ENCODE measurements at regions of chrX and their contacts with region 1.

Region 1: DNA sequence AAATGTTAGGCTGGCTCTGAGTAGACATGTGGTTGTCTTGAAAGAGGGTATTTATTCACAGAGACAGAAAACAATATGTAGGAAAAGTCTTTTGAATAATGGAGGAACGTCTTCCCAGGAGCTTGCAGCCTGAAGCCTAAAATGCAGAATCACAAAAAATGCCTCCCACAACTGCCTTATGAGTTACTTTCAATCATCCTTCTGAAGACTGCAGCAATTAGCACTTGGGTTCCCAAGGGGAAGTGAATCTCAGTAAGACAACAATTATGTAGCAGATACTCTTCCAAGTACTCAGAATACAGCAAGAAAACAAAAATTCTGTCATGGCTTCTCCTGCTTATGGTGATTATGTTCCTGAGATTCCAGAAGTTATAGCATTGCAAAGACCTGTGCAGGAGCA is 166.6 kb upstream of the TBL1X start:
- DNase-seq: no peak
- ATAC-seq: no peak
- H3K4me3 ChIP-seq: no peak overlapping the region
- H3K4me3 Mint-ChIP-seq: no peak overlapping the region
- H3K27ac ChIP-seq: no peak overlapping the region
- H3K27ac Mint-ChIP-seq: no peak overlapping the region
- H3K4me1 ChIP-seq: no peaks in the 10 kb centered on the region
- H3K4me1 Mint-ChIP-seq: no peaks in the 10 kb centered on the region
- H3K27me3 ChIP-seq: no peaks in the 10 kb centered on the region
- H3K27me3 Mint-ChIP-seq: no peaks in the 10 kb centered on the region
- CTCF ChIP-seq: no peak

Region 2: DNA sequence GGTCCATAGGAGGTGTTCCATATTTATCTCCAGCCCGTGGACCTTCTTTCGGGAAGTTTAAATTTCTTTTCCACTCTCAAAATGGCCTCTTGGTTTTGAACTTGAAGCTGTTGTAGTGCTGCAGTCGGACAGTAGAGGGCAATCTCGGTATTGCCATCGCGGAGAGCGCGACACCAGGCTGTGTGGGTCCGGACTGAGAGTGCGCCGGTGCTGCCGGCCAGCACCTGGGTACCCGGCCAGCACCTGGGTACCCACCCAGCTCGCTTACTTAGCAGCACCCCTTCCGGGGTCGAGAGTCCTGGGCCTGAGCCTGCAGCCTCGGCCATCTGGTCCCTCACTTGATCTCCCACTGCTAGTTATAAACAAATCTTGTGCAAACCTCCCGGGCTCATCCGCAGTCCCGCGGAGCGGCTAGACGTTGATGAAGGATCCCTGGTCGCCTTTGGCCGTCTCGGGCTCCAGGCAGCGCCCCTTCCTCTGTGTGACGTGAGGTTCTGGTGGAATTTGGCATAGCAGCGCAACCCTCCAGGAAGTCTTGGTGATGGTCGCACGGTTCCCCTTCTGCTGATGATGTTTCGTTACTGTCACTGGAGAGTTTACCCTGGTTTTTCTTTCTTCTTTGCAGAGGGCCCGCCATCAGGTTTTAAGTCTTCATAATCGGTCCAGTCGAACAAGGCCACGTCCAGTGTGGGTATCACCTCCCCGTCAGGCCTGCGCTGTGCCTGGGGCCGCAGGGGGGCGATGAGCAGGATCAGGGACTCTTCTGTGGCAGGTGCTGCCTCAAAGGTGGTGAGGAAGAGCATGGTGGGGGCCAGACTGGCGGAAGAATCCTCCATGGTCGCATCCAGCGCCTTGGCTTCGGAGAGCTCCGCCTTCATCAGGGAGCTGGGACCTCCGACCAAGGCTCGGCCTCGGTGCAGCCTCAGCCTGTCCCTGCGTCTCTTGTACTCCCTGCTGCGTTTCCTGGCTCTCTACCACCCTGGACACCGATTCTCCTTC is 514.8 kb before region 1 on chrX:
- CTCF ChIA-PET with region 1: no interaction called
- POLR2A ChIA-PET with region 1: no interaction called
- intact Hi-C with region 1: loop called in 1 of 2 experiments (anchors 5 kb)
- DNase-seq: peak in 7 of 9 experiments; percentile 1 to 52 (median 33)
- ATAC-seq: peak; percentile 67
- H3K4me3 ChIP-seq: no peak overlapping the region
- H3K4me3 Mint-ChIP-seq: peak overlapping the region; percentile 35
- H3K27ac ChIP-seq: no peak overlapping the region
- H3K27ac Mint-ChIP-seq: no peak overlapping the region
- H3K4me1 ChIP-seq: no peaks in the 10 kb centered on the region
- H3K4me1 Mint-ChIP-seq: peaks cover 6% of the 10 kb centered on the region
- H3K27me3 ChIP-seq: no peaks in the 10 kb centered on the region
- H3K27me3 Mint-ChIP-seq: no peaks in the 10 kb centered on the region
- CTCF ChIP-seq: peak; percentile 35

Region 3: DNA sequence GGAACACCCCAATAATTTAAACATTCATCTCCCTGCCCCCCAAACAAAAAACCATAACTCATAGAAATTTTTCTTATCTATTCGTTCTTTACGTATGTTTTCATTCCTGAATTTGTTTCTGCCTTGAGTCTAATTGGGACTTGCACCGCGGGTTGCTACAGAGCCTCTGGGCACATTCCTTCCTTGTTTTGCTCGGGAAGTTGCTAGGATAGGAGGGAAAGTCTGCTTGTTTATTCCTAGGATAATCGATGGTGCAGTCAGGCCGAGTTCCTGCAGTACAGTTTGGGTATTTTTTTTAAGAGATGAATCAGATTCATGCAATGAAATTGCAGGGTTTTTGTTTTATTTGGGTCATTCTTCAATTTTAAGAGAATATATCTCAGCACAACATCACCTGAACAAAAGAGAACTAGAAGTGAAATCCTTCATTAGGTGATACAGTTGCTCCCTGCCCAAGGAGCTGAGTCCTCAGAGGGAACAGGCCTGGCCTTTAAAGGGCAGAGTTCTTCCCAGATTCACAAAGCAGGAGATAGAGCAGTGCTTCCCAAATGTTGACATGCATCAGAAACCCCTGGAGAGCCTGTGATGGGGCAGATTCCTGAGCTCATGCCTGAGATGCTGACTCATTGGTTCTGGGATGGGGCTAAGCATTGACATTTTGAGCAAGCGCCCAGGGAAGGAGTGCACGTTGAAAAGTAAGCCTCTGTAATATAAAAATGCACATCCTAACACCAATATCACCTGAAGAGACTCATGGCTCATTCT is 149.4 kb before region 1 on chrX:
- CTCF ChIA-PET with region 1: no interaction called
- POLR2A ChIA-PET with region 1: no interaction called
- intact Hi-C with region 1: no loop called
- DNase-seq: no peak
- ATAC-seq: no peak
- H3K4me3 ChIP-seq: no peak overlapping the region
- H3K4me3 Mint-ChIP-seq: no peak overlapping the region
- H3K27ac ChIP-seq: no peak overlapping the region
- H3K27ac Mint-ChIP-seq: no peak overlapping the region
- H3K4me1 ChIP-seq: no peaks in the 10 kb centered on the region
- H3K4me1 Mint-ChIP-seq: peaks cover 6% of the 10 kb centered on the region
- H3K27me3 ChIP-seq: no peaks in the 10 kb centered on the region
- H3K27me3 Mint-ChIP-seq: no peaks in the 10 kb centered on the region
- CTCF ChIP-seq: no peak

Region 4: DNA sequence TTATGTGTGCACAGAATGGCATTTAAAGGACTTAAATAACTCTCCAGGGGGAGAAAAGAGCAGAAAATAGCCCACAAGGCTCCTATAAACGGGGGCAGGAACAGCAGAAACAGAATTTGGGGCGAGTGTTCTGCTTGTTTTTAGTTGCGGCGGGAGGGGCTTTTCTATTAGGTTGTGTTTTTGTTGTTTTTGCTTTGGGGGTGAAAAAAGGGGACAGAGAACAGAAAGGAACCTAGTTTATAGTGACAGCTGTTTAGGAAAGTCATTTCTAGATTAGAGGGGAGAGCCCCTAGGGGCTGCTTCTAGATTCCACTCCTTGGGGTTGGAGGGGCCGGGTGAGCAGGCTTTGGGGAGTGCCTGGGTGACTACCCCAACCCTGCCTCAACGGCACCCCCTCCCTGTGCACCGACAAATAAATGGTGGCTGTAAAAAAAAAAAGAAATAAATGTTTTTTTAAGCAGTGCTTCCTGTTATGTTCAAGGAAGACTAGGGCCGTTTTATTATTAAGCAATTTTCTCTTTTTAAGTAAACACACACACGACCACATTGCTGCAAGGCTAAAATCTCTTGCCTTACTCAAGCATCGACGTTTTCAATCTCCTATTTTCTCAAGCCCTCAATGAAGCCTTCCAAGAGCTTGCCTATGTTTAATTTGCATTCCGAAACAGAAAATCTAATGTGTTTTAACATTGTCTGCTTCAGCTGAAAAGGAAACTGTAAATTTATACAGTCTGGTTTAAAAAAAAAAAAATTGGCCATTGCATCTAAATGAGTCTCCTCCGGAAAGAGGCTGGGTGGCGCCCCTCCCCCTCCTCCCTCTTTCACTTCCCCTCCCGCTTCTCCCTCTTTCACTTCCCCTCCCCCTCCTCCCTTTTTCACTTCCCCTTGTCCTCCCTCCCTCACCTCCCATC is 43.3 kb after region 1 on chrX:
- CTCF ChIA-PET with region 1: no interaction called
- POLR2A ChIA-PET with region 1: no interaction called
- intact Hi-C with region 1: no loop called
- DNase-seq: peak in 6 of 9 experiments; percentile 55 to 84 (median 74)
- ATAC-seq: peak; percentile 50
- H3K4me3 ChIP-seq: peak overlapping the region; percentile 35 to 46
- H3K4me3 Mint-ChIP-seq: peak overlapping the region; percentile 85
- H3K27ac ChIP-seq: peak overlapping the region; percentile 81
- H3K27ac Mint-ChIP-seq: peak overlapping the region; percentile 98
- H3K4me1 ChIP-seq: peaks cover 24% of the 10 kb centered on the region
- H3K4me1 Mint-ChIP-seq: peaks cover 37% of the 10 kb centered on the region
- H3K27me3 ChIP-seq: no peaks in the 10 kb centered on the region
- H3K27me3 Mint-ChIP-seq: no peaks in the 10 kb centered on the region
- CTCF ChIP-seq: no peak